ENCODE measurements at regions of chr17 and their contacts with region 1.

Region 1: DNA sequence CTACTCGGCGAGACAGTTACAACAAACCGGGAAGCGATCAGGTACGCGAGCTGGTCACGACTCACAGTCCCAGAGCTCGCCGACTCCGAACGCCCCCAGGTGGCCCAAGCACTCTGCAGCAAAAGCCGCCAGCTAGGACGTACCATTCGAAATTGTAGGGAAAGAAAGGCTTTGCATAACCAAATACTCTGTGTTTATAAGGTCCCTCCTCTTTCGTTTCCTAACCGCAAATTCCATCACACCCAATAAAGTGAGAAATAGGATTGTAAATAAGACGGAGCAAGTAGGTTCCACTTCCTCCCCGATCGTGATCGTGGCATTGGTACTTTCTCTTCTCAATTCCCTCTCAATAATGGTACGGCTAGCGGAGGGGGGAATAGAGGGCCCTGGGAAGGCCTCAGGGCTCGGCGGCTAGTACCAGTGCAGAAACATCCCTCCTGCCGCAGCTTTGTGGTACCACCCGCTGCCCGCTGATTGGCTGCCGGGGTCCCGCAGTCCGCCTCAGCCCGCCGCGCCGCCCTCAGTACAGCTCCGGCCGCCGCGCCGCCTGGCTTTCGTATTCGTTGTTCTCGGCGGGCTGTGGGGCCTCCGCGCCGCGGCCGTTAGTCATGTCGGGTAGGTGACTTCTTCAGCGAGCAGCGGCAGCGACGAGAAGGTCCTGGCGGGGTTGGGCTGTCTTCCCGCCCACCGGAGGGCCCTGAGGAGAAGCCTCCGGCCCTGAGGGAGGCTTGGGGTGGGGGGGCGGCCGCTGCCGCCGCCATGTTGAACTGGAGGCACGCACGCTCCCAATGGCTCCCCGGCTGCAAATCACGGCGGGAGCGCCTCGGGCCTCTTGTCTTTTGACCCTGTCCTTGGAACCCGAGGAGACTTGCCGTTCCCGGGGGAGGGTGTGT is at the start of gene TAF15:
- DNase-seq: peak; percentile 95 to 97
- ATAC-seq: peak; percentile 96 to 99 (median 98)
- H3K4me3 ChIP-seq: peak within 1 kb of the TSS; percentile 87
- H3K27ac ChIP-seq: peak within 1 kb of the TSS; percentile 92
- H3K4me1 ChIP-seq: peaks cover 20% of the 10 kb centered on the region
- H3K27me3 ChIP-seq: no peaks in the 10 kb centered on the region
- CTCF ChIP-seq: peak; percentile 72
- total RNA-seq, gene TAF15: 101 to 141 (median 125) TPM

Region 2: DNA sequence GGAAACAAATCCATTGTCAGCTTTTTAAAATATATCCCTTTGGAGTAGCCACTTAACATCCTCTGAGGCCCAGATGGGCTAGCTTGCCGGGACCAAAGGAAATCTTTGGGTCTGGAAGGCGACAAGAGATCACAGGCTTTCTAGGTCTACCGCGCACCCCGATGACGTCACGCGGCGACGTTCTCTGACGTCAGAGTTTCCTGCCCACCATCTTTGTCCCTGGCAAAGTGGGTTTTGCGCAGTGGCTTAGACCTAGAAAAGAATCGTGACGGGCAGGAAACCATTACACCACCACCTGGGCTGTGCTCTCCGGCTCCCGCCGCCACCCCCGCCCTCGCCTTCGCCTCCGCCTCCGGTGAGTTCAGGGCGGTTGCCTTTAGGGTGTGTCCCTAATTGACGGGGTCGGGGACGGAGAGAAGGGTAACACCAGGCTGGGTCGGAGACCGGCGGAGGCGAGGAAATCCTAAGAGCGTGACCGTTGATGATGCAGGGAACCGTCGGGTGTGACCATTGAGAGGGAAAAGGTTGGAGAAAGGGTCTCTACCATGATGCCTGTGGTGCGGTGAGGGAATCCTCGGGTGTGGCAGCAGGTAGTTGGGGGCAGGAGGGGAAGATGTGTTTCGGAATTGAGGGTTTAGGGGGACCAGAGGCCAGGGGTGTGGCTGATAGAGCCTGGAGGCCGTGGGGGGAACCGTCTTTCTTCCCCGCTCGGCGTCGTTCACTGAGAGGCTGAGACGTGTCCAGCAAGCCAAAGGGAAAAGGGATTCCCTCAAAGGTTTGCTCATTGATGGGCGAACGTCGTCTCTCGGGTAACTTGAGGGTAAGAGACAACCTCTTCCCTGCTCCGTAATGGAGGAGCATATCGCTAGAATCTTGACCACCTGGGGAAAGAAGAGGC is 221.9 kb before region 1 on chr17 and contains the start of gene AP2B1:
- intact Hi-C with region 1: loop called in 1 of 2 experiments (anchors 5 kb)
- DNase-seq: peak; percentile 91 to 96
- ATAC-seq: peak; percentile 95 to 97 (median 96)
- H3K4me3 ChIP-seq: peak within 1 kb of the TSS; percentile 74
- H3K27ac ChIP-seq: peak within 1 kb of the TSS; percentile 93
- H3K4me1 ChIP-seq: peaks cover 16% of the 10 kb centered on the region
- H3K27me3 ChIP-seq: no peaks in the 10 kb centered on the region
- CTCF ChIP-seq: no peak
- total RNA-seq, gene AP2B1: 63.2 to 92.4 (median 84.7) TPM

Region 3: GRCh38 chr17:35752945-35753764 is 56.1 kb before region 1 on chr17 and contains the start of gene GAS2L2:
- intact Hi-C with region 1: no loop called
- DNase-seq: no peak
- ATAC-seq: peak in 3 of 4 donors; percentile 9 to 33 (median 26)
- H3K4me3 ChIP-seq: no peak within 1 kb of the TSS
- H3K27ac ChIP-seq: no peak within 1 kb of the TSS
- H3K4me1 ChIP-seq: no peaks in the 10 kb centered on the region
- H3K27me3 ChIP-seq: peaks cover 0 to 13% (median 4%) of the 10 kb centered on the region in 3 donors
- CTCF ChIP-seq: no peak
- total RNA-seq, gene GAS2L2: 0.09 to 0.27 (median 0.10) TPM in 3 of 4 donors, not detected in the other

Region 4: DNA sequence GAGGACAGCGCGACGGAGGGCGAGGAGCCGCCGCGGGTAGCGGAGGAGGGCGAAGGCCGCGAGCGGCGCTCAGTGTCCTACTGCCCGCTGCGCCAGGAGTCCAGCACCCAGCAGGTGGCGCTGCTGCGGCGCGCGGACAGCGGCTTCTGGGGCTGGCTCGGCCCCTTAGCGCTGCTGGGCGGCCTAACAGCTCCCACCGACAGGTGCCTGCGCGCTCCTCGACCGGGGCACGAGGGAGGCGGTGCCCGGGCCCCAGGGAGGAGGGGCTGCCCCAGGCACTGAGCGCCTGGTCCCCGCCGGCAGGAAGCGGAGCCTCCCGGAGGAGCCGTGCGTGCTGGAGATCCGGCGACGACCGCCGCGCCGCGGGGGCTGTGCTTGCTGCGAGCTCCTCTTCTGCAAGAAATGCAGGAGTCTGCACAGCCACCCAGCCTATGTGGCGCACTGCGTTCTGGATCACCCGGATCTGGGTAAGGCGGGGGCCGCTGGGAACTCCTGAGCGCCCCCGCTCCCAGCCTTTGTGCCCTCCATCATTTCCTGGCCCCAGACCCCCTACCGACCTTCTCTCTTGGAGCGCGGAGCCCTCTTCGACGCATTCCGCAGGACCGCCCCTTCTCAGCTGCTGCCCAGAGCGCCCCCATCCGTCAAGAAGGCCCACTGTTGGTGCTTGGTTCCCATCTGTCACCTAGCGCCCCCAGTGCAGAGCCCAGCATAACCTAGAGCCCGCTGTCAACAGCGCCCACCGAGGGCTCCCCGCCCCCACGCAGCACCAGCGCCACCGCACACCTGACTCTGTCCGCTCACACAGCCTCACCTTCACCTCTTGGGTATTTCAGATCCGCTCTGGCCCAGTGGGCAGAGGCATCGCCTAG is 44.9 kb before region 1 on chr17:
- intact Hi-C with region 1: loop called (anchors 1 to 2 kb)
- DNase-seq: peak; percentile 90 to 94
- ATAC-seq: peak; percentile 95 to 98 (median 96)
- H3K4me3 ChIP-seq: peak overlapping the region; percentile 73
- H3K27ac ChIP-seq: peak overlapping the region; percentile 41
- H3K4me1 ChIP-seq: peaks cover 6% of the 10 kb centered on the region
- H3K27me3 ChIP-seq: no peaks in the 10 kb centered on the region
- CTCF ChIP-seq: peak; percentile 97